ENCODE measurements at regions of chr1 and their contacts with region 1.

Region 1: DNA sequence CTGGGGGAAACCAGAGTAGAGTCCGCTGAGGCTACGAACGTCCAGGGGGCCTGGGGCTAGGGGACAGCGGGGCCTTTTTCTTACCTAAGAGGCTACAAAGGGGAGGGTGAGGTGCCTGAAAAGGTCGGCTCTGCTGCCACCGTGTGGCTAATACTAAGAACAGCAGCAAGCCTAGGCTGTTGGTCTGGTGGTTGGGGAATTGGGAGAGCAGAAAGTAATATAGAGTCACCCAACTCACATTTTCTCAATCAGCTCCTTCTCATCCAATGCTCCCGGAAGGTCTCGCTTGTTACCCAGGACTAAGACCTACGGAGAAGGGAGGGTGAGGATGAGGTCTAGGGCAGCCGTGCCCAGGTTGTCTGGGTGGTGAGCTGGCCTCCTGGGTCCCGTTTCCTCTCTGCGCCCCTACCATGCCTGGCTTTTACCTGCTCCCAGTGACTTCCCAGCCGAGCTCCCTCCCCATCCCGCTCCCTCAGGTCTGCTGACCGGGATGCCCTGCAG is 9.3 kb downstream of the ARL8A start:
- DNase-seq: peak; percentile 61
- H3K4me3 Mint-ChIP-seq: no peak overlapping the region
- H3K27ac Mint-ChIP-seq: no peak overlapping the region
- H3K4me1 Mint-ChIP-seq: peaks cover 7% of the 10 kb centered on the region
- H3K27me3 Mint-ChIP-seq: no peaks in the 10 kb centered on the region

Region 2: GRCh38 chr1:201870397-201870796 is 264.9 kb before region 1 on chr1:
- CTCF ChIA-PET with region 1: no interaction called
- DNase-seq: no peak
- H3K4me3 Mint-ChIP-seq: no peak overlapping the region
- H3K27ac Mint-ChIP-seq: no peak overlapping the region
- H3K4me1 Mint-ChIP-seq: no peaks in the 10 kb centered on the region
- H3K27me3 Mint-ChIP-seq: no peaks in the 10 kb centered on the region

Region 3: DNA sequence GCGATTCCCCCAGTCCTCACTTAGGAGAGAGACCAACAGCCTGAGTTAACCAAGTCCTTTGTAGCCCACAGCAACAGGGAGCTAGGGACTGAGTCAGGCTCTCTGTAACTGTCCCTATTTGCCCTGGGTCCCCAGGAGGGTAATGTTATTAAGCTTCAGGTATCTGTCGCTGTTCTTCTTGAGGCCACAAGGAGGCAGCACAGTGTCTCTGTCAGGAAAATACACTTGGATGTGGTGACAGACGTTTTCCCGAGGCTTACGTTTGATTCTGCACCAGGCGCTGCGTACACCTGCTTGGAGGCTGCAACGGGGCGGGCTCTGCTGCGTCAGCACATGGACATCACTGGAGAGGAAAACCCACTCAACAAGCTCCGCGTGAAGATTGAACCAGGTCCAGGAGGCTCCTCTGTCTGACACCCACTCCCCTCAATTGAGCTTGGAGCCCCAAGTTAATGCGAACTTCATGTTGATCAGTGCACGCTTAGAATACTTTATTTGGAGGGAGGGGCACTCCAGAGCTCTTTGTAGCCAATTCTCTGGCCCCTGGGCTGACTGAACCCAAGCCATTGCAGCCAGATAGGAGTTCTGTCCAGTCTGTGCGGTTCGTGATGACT is 135.5 kb before region 1 on chr1:
- CTCF ChIA-PET with region 1: interaction called, 32 read pairs
- DNase-seq: peak; percentile 48
- H3K4me3 Mint-ChIP-seq: no peak overlapping the region
- H3K27ac Mint-ChIP-seq: no peak overlapping the region
- H3K4me1 Mint-ChIP-seq: no peaks in the 10 kb centered on the region
- H3K27me3 Mint-ChIP-seq: no peaks in the 10 kb centered on the region

Region 4: GRCh38 chr1:202009326-202010179 is 125.7 kb before region 1 on chr1:
- CTCF ChIA-PET with region 1: interaction called, 16 read pairs
- DNase-seq: peak; percentile 71
- H3K4me3 Mint-ChIP-seq: no peak overlapping the region
- H3K27ac Mint-ChIP-seq: no peak overlapping the region
- H3K4me1 Mint-ChIP-seq: no peaks in the 10 kb centered on the region
- H3K27me3 Mint-ChIP-seq: no peaks in the 10 kb centered on the region

Region 5: GRCh38 chr1:202329891-202330290 is 194.6 kb after region 1 on chr1:
- CTCF ChIA-PET with region 1: no interaction called
- DNase-seq: no peak
- H3K4me3 Mint-ChIP-seq: no peak overlapping the region
- H3K27ac Mint-ChIP-seq: no peak overlapping the region
- H3K4me1 Mint-ChIP-seq: no peaks in the 10 kb centered on the region
- H3K27me3 Mint-ChIP-seq: no peaks in the 10 kb centered on the region

Measured in activated naive CD4-positive, alpha-beta T cell treated with anti-CD3 and anti-CD28 coated beads, Interleukin-2, amount 10 ng/mL, durations not matched to agents 7 days and 5 days (primary cell).